Vagina (tissue), 2 donors: ENCODE measurements at regions of chr5 and their contacts with region 1.

Region 1: DNA sequence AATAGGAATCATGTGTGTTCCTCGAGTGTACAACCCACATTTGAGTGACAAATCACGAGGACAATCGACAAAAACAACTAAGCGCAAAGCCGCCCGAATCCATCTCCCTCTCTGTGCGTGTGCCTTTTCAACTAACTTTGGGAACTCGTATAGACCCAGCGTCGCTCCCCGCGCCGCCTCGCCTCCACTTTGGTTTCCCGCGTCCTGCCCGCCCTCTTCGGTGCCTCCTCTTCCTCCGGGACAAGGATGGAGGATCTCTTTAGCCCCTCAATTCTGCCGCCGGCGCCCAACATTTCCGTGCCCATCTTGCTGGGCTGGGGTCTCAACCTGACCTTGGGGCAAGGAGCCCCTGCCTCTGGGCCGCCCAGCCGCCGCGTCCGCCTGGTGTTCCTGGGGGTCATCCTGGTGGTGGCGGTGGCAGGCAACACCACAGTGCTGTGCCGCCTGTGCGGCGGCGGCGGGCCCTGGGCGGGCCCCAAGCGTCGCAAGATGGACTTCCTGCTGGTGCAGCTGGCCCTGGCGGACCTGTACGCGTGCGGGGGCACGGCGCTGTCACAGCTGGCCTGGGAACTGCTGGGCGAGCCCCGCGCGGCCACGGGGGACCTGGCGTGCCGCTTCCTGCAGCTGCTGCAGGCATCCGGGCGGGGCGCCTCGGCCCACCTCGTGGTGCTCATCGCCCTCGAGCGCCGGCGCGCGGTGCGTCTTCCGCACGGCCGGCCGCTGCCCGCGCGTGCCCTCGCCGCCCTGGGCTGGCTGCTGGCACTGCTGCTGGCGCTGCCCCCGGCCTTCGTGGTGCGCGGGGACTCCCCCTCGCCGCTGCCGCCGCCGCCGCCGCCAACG is at the start of gene GPR150:
- DNase-seq: no peak
- H3K4me3 ChIP-seq: peak within 1 kb of the TSS; percentile 56 to 66
- H3K27ac ChIP-seq: peak within 1 kb of the TSS; percentile 19
- H3K4me1 ChIP-seq: peaks cover 21% of the 10 kb centered on the region
- H3K27me3 ChIP-seq: no peaks in the 10 kb centered on the region
- CTCF ChIP-seq: no peak
- POLR2A ChIP-seq: no peak
- total RNA-seq, gene GPR150: 1.7 TPM

Region 2: DNA sequence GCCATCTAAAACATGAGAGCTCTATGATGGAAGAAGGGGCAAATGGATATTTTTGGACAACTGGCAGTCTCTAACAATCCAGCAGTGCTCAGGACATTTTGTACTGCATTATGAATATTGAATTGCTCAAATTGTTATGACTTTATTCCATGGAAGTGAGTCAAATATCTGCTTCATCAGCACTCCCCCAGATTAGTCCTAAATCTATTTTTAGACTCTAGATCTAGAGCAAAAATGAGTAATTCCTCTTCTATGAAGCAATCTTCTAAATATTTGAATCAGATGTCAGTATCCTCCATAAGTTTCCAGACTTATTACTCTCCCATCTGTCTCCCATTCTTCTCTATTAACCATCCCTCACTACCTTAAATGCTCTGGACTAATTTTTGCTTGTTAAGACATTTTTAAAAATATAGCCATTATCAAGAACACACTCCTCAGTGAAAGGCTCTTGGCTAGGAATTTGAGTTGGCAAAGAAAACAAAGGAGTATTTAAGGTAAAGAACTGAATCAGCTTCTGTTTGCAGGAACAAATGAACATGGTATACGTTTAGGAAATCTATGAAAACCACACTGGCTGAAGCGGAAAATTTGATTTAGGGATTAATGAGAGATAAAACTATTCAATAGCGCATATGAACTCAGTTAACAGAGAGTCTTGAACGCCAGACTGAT is 636.3 kb before region 1 on chr5:
- intact Hi-C with region 1: no loop called
- DNase-seq: no peak
- H3K4me3 ChIP-seq: no peak overlapping the region
- H3K27ac ChIP-seq: no peak overlapping the region
- H3K4me1 ChIP-seq: no peaks in the 10 kb centered on the region
- H3K27me3 ChIP-seq: no peaks in the 10 kb centered on the region
- CTCF ChIP-seq: no peak
- POLR2A ChIP-seq: no peak

Region 3: DNA sequence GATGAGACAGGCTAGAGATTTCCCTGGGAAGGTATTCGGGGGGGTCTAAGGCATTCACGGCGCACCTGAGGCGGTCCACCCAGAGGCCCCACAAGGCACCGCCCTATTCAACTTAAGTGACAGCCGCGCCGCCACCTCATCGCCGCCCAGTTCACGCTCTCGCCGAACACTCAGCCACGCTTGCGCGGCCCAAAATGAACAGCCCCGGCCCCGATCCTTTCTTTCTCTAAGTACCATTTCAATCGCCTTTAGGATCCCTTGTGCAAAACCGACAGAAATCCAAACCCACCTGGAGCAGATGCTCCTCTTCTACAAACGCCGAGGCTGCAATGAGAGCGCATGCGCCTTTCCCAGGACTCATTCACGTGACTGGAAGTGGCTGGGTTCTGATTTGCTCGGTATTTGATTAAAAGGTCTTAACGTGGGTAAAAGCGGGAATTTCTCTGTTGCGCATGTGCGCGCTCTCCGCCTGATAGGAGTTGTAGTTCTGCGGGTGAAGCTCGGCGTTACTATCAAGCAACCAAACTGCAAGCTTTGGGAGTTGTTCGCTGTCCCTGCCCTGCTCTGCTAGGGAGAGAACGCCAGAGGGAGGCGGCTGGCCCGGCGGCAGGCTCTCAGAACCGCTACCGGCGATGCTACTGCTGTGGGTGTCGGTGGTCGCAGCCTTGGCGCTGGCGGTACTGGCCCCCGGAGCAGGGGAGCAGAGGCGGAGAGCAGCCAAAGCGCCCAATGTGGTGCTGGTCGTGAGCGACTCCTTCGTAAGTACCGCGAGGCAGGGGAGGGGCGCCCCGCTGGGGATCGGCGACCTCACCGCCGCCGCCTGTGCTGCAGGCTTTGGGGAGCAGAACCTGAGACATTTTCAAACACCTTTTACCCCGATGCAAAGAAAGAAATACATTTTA is 65.4 kb before region 1 on chr5 and contains the starts of genes ARSK and SKIC3:
- intact Hi-C with region 1: loop called (anchors 10 kb)
- DNase-seq: peak; percentile 97 to 99
- H3K4me3 ChIP-seq: peak within 1 kb of the TSS; percentile 69 to 77
- H3K27ac ChIP-seq: peak within 1 kb of the TSS; percentile 81
- H3K4me1 ChIP-seq: peaks cover 28% of the 10 kb centered on the region
- H3K27me3 ChIP-seq: no peaks in the 10 kb centered on the region
- CTCF ChIP-seq: peak in 1 of 3 experiments; percentile 31
- POLR2A ChIP-seq: peak in 1 of 2 donors; percentile 72
- total RNA-seq, gene ARSK: 9.1 TPM
- total RNA-seq, gene SKIC3: 59.7 TPM

Region 4: DNA sequence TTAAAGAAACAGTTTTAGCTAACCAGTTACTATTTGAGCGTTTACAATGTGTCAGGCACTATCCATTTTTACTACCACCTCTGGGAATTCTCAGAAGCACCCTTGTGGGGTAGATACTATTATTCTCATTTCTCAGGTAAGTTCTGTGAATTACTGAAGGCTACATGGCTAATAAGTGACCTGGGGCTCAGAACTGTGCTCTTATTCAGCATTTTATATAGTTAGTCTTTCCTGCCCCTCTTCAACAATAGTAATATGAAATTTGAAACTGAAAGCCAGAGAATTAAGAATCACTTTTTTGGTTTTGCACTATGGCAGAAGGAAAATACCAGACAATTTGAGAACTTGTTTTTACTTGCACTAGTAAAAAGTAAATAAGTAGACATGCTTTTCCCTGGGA is 329.6 kb after region 1 on chr5:
- intact Hi-C with region 1: no loop called
- DNase-seq: no peak
- H3K4me3 ChIP-seq: no peak overlapping the region
- H3K27ac ChIP-seq: no peak overlapping the region
- H3K4me1 ChIP-seq: peaks cover 39% of the 10 kb centered on the region
- H3K27me3 ChIP-seq: no peaks in the 10 kb centered on the region
- CTCF ChIP-seq: no peak
- POLR2A ChIP-seq: no peak